ENCODE measurements at regions of chr20 and their contacts with region 1.

Region 1: DNA sequence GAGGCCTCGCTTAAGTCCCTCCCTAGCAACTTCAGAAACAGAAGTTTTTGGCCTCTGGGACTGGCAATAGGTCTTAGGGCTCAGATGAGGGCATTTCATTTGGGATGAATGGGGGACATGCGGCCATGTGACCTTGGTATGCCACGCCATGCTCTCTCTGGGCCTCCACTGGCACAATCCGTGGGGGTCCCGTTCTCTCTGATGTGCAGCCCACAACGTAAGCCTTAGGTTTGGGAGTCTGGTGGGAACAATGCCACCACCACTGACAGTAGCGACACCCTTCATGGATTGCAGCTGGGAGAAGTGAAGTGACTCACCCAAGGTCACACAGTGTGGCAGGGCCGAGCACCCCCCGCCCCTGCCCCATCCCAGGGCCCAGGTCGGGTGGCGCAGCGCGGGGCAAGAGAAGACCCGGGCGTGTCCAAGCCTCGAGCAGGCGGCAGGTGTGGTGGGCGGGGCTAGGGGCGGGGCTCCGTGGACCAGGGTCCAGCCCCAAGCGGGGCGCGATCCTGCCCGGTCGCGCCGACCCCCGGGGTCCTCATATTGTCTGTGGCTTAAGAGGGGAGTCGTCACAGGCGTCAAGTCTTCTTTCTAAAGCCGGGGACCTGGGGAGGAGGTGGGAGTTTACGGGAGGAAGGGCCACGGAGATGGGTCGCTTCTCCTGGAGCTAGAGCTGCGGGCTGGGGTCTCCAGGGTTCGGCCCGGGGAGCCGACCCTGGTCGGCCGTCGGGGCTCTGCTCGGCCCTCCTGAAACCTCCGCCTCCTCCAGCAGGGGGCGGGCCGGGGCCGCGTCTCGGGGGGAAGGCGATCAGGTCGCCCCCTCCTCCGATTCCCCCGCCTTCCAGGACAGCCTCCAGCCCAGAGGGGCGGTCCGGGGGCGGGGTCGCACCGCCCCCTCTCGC is 698 bp upstream of the CEBPB start:
- DNase-seq: peak; percentile 94
- ATAC-seq: peak; percentile 78

Region 2: DNA sequence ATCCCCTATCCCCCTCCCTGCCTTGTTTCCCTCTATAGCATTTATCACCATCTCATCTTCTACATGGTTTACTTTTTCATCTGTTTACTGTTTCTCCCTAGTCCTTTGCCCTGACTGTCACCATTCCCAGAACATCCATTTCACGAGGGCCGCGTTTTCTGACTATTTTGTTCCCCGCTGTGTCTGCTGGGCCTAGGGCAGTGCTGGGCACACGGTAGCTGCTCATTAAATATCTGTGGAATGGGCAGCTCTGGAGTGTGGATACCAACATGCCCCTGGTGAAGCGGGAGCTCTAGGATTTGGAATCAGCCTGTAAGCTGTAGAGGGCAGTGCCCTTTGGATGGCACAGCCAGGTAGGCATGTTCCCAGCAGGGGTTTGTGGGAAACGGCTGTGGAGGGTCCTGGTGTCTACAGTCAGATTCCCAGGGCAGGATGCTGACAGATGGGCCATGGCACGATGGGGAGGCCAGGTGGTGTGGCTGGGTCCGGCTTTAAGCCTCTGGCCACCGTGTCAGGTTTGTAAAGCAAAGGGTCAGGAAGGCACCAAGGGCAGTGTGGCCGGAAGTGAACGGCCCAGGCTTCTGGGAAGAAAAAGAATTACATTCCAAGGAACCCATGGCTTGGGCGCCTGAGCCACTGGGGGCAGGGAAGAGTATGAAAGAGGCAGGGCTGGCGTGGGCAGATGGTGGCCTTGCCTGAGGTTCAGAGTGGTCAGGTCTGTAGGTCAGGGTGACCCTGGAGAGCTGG is 121.9 kb before region 1 on chr20:
- intact Hi-C with region 1: no loop called
- DNase-seq: no peak
- ATAC-seq: no peak

Region 3: DNA sequence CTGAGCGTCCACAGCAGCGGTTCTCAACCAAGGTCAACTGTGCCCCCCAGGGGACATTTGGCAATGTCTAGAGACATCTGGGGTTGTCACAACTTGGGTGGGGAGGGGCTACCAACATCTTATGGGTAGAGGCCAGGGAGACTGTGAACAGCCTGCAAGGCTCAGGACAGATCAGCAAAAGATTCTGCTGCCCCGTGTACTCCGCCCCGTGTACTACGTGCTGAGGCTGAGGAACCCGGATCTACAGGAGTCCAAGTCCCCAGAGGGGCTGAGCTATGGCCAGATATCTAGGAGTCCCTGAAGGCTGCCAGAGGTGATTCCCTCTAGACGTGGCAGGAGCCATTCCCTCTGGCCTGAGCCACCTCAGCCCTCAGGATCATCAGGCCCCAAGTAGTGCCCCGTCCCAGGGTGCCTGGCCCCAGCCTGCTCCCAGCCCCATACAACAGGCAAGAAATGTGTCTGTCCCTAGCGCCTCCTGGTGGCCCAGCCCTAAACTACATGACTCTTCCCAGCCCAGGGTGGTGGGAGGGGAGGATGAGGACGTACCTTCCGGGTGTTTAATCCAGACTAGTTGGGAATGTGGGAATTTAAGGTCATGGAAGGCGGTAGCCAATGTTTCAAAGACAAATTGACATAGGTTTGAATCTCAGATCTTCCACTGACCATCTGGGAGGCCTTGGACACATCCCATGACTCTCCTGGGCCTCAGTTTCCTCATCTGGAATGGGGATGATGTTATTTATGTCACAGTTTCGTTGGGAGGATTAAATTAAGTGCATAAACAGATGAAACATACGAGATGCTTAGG is 270.7 kb after region 1 on chr20:
- intact Hi-C with region 1: loop called (anchors 5 kb)
- DNase-seq: peak; percentile 94
- ATAC-seq: peak; percentile 87

Region 4: GRCh38 chr20:50575847-50576720 is 386.2 kb after region 1 on chr20:
- intact Hi-C with region 1: loop called (anchors 5 kb)
- DNase-seq: peak; percentile 85
- ATAC-seq: peak; percentile 61